IMR-90 (cell line): ENCODE measurements at regions of chr6 and their contacts with region 1.

Region 1: GRCh38 chr6:20669571-20670314 is 135.5 kb downstream of the CDKAL1 start:
- DNase-seq: peak; percentile 18
- ATAC-seq: no peak
- H3K4me3 ChIP-seq: no peak overlapping the region
- H3K27ac ChIP-seq: no peak overlapping the region
- H3K4me1 ChIP-seq: no peaks in the 10 kb centered on the region
- H3K27me3 ChIP-seq: no peaks in the 10 kb centered on the region
- CTCF ChIP-seq: no peak
- POLR2A ChIP-seq: no peak
- RAD21 ChIP-seq: no peak

Region 2: DNA sequence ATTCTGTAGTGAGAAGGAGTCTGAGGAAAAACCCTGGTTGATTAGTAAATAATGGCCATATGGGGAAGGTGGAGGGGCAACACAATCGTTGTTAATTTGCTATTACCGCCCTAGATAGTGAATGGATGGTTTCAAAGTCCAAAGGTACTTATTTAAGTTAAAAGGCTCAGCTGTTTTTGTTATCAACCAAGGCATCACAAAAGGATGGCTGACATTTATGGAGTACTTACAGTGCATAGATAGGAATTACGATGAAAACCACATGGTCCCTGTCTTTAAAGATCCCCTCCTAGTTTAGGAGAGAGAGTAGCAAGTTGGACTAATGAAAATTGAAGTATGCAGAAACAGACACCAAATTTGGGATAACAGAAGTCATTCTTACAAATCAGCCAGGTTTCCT is 184.1 kb after region 1 on chr6:
- CTCF ChIA-PET with region 1: no interaction called
- POLR2A ChIA-PET with region 1: no interaction called
- dilution Hi-C with region 1: no loop called
- in situ Hi-C with region 1: no loop called
- intact Hi-C with region 1: loop called (anchors 10 kb)
- DNase-seq: no peak
- ATAC-seq: no peak
- H3K4me3 ChIP-seq: no peak overlapping the region
- H3K27ac ChIP-seq: no peak overlapping the region
- H3K4me1 ChIP-seq: no peaks in the 10 kb centered on the region
- H3K27me3 ChIP-seq: no peaks in the 10 kb centered on the region
- CTCF ChIP-seq: no peak
- POLR2A ChIP-seq: no peak
- RAD21 ChIP-seq: no peak